ENCODE measurements at regions of chr6 and their contacts with region 1.

Region 1: DNA sequence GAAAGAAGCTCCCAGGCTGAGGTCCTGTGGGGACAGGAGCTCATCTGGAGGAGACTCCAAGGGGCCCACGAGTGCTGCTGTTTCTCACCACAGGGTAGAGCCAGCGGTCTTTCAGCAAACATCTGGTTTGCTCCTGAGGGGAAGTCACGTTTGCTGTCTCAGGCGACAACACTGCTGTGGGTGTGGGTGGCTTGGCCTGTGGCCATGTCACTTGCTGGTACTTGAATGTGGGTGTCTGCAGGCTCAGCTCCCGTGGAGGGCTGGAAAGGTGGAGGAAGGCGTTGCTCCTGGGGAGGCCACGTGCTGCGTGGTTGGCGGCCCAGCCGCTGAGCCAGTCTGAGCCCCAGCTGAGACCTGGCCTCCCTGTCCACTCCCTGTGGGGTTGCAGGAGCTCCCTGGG is 52.8 kb upstream of the MPC1 start:
- DNase-seq: no peak
- H3K4me3 ChIP-seq: no peak overlapping the region
- H3K4me3 Mint-ChIP-seq: no peak overlapping the region
- H3K27ac Mint-ChIP-seq: no peak overlapping the region
- H3K4me1 ChIP-seq: no peaks in the 10 kb centered on the region
- H3K4me1 Mint-ChIP-seq: no peaks in the 10 kb centered on the region
- H3K27me3 ChIP-seq: no peaks in the 10 kb centered on the region; the same call in 1 of the 2 replicates
- H3K27me3 Mint-ChIP-seq: peaks cover 8% of the 10 kb centered on the region
- CTCF ChIP-seq: no peak

Region 2: GRCh38 chr6:166379800-166380199 is 55.8 kb before region 1 on chr6:
- CTCF ChIA-PET with region 1: no interaction called
- POLR2A ChIA-PET with region 1: no interaction called
- intact Hi-C with region 1: no loop called
- DNase-seq: no peak
- H3K4me3 ChIP-seq: no peak overlapping the region
- H3K4me3 Mint-ChIP-seq: no peak overlapping the region
- H3K27ac Mint-ChIP-seq: no peak overlapping the region
- H3K4me1 ChIP-seq: 0 out of 2 replicates have a peak, but pooled peaks cover 6% of the 10 kb centered on the region
- H3K4me1 Mint-ChIP-seq: no peaks in the 10 kb centered on the region
- H3K27me3 ChIP-seq: no peaks in the 10 kb centered on the region
- H3K27me3 Mint-ChIP-seq: no peaks in the 10 kb centered on the region
- CTCF ChIP-seq: no peak

Region 3: GRCh38 chr6:166420351-166420750 is 15.2 kb before region 1 on chr6:
- CTCF ChIA-PET with region 1: no interaction called
- POLR2A ChIA-PET with region 1: interaction called, 3 read pairs
- intact Hi-C with region 1: loop called (anchors 1 kb)
- DNase-seq: peak; percentile 58 to 69
- H3K4me3 ChIP-seq: no peak overlapping the region
- H3K4me3 Mint-ChIP-seq: no peak overlapping the region
- H3K27ac Mint-ChIP-seq: no peak overlapping the region
- H3K4me1 ChIP-seq: peaks cover 6% of the 10 kb centered on the region; the same call in 1 of the 2 replicates
- H3K4me1 Mint-ChIP-seq: peaks cover 7% of the 10 kb centered on the region
- H3K27me3 ChIP-seq: peaks cover 1% of the 10 kb centered on the region; the same call in 1 of the 2 replicates
- H3K27me3 Mint-ChIP-seq: peaks cover 9% of the 10 kb centered on the region
- CTCF ChIP-seq: peak; percentile 29 to 38

Region 4: GRCh38 chr6:166760288-166760687 is 324.7 kb after region 1 on chr6:
- CTCF ChIA-PET with region 1: no interaction called
- POLR2A ChIA-PET with region 1: no interaction called
- intact Hi-C with region 1: loop called (anchors 10 kb)
- DNase-seq: no peak
- H3K4me3 ChIP-seq: no peak overlapping the region
- H3K4me3 Mint-ChIP-seq: no peak overlapping the region
- H3K27ac Mint-ChIP-seq: no peak overlapping the region
- H3K4me1 ChIP-seq: no peaks in the 10 kb centered on the region
- H3K4me1 Mint-ChIP-seq: no peaks in the 10 kb centered on the region
- H3K27me3 ChIP-seq: no peaks in the 10 kb centered on the region
- H3K27me3 Mint-ChIP-seq: peaks cover 17% of the 10 kb centered on the region
- CTCF ChIP-seq: no peak